ENCODE measurements at regions of chr17 and their contacts with region 1.

Region 1: DNA sequence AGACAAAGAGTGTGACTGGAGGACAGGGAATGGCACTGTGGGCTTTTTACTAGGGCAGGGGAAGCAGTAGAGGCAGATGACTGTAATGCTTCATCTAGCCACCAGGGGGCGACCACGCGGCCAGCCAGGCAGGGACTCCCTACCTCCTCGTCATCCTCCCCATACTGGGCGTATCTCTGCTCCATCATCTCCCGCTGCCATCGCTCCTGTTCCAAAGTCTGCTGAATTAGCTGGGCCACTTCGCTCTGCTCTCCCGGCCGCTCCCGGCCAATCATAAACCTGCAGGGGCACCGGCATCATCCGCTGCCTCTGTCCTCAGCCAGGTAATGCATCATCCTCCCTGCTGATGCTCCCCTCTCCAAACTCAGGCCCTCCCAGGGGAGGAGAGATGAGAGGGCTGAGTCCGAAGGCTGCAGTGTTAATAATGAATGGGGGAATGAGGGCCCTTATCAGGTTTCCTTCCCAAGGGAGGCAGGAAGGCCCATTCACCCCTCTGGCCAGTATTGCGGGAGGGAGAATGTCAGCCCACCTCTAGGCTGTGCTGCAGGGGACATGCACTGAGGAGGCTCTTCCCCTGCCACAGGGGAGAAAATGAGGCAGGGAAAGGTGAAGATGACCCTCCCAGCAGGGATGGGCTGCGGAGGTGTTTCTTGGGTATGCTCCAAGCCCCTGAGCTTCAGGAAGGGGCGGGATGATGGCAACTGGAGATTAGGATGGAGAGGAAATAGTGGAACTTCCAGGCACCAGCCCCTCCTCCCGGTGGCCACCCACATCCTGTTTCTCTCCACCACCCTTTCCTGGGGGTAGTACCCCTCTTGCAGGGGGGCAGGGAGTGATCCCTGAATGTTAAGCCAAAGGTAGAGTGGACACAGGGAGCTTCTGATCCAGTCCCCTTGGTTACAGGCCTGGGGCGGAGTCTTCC is 10.3 kb upstream of the SAMD14 start:
- DNase-seq: no peak
- H3K4me3 ChIP-seq: no peak overlapping the region
- H3K27ac ChIP-seq: no peak overlapping the region
- H3K27me3 ChIP-seq: no peaks in the 10 kb centered on the region
- CTCF ChIP-seq: peak; percentile 75

Region 2: DNA sequence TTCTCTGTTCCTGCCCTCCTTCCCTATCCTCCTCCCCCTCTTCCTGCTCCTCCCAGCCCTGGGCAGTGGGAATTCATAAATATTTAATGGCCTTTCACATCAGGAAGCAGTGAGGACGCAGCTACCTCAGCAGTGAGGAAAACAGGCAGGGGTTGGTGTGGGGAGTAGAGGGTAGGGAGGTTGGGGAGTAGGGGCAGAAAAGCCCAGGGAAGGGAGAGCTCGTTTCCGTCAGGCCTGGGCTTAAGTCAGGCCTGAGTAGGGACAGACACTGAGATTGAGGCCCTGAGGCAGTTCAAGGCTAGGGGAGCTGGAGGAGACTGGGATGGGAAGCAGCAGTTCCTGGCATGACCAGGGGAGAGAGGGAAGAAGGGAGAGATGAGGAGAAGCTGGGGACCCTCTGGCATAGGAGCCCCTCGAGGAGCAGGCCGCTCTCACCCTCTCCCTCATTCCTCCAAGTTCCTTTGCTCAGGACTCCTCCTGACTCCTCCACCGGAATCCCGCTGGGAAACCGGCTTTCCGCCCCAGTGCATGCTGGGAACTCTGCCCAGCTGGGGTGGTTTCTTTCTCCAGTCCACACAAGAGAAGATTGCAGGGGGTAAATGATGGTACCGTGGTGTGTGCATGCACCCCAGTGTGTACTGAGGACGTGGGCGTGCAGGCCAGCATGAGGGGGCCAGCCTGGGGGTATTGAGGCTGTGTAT is 16.4 kb before region 1 on chr17:
- CTCF ChIA-PET with region 1: no interaction called
- POLR2A ChIA-PET with region 1: no interaction called
- DNase-seq: no peak
- H3K4me3 ChIP-seq: no peak overlapping the region; the same call in 1 of the 2 replicates
- H3K27ac ChIP-seq: peak overlapping the region; percentile 21
- H3K27me3 ChIP-seq: peaks cover 2% of the 10 kb centered on the region
- CTCF ChIP-seq: no peak

Region 3: DNA sequence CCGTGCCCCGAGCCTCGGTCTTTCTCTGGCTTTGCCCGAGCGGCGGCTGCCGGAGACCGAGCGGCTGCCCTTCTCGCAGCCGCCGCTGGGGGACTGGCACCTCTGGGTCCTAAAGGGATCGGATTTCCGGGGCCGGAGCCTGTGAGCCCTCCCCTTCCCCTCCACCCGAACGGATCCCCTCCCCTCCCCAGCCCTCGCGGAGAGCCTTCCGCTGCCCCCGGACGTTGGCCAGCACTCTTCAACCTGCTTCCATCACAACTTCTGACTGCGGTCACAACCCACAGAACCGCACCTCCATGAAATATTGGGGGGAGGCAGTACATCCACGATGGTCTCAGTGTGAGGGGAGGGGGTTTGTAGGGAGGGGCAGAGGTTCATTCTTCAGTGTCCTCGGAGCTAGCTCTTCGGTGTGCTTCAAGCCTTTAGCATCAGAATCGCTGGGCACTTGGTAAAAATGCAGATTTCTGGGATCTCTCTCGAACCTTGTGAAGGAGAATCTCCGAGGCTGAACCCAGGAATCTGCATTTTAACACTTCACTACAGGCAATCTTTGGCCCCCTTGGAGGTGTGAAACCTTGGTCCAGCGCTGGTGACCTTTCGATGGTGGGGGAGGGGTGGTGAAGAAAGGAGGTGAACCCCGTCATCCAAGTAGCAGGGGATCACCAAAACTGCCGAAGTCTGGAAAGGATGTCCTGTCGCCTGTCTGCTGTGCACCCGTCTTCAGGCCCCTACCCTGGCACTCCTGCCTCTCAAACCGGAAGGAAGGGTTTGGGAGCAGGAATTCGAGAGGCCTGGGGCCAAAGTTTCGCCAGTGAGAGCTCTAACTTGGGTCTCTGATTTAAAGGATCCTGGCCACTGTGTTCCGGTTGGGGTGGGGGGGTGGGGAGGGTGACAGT is 11.1 kb after region 1 on chr17:
- CTCF ChIA-PET with region 1: interaction called, 11 read pairs
- POLR2A ChIA-PET with region 1: interaction called, 3 read pairs
- DNase-seq: peak; percentile 69
- H3K4me3 ChIP-seq: peak overlapping the region; percentile 79
- H3K27ac ChIP-seq: peak overlapping the region; percentile 67
- H3K27me3 ChIP-seq: no peaks in the 10 kb centered on the region
- CTCF ChIP-seq: peak; percentile 69